GM12878 (cell line): ENCODE measurements at regions of chr22 and their contacts with region 1.

Region 1: DNA sequence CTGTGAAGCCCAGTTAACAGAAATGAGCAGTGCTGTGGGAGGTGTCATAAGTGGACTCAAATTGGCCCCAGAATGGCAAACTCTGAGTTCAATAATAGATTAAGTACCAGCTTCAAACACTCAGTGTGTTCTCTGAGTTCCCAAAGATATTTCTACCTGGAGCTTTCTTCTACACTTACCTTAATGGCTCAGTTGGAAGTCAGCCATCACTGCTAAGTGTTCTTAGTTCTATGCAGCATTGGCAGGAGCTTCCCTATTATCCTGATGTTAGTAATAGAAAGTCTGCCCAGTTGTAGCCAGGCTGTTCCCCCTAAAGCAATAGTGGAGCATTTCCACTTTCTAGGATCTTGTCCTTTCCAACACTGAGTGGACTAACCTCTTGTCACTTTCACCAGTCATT is 9.7 kb upstream of the PIK3IP1 start:
- DNase-seq: no peak
- ATAC-seq: no peak
- H3K4me3 ChIP-seq: no peak overlapping the region
- H3K27ac ChIP-seq: no peak overlapping the region
- H3K4me1 ChIP-seq: peaks cover 7% of the 10 kb centered on the region
- H3K27me3 ChIP-seq: no peaks in the 10 kb centered on the region
- CTCF ChIP-seq: no peak
- EP300 ChIP-seq: no peak
- POLR2A ChIP-seq: no peak
- RAD21 ChIP-seq: no peak

Region 2: DNA sequence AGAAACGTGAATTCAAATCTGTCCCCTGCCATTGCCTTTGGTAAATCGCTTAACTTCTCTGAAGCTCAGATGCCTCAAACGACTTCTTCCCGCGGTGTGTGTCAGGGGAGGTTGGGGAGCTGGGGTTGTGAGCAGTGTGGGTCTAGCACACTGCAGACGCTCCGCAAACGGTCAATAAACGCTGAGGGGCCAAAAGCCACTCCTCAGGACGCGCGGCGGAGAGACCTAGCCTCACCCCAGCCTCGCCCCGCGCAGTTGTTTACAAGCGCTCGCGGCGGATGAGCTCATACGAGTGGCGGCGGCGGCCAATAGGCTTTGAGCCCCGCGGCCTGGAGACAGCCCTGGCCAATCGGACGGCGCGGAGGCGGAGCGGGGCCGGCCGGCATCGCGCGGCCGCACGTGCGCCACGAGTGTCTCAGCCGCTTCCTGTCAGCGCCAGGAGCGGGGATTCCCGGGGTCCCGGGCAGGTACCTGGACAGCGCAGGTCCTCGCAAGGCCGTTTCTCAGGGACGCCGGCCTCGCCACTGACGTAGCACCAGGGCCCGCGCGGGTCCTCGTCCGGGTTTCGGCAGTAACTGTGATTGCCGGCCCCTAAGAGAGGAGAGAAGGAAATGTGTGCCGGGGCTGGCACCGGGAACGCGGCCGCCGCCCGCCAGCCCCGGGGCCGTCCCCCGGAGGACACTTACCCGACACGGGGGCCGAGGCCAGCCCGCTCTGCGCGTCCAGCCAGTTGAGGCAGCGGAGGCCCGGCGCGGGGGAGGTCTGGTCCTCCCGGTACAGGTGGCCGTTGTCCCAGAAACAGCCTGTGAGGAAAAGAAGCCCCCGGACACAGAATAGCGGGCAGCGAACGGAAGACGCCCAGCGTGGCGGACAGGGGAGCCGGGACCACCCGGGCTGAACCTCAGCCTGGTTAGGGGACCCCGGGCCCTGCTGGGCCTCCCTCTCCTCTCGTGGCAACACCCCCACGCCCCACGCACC is 11.2 kb before region 1 on chr22:
- CTCF ChIA-PET with region 1: interaction called, 11 read pairs
- POLR2A ChIA-PET with region 1: interaction called, 4 read pairs
- RAD21 ChIA-PET with region 1: interaction called, 4 read pairs
- SMC1A ChIA-PET with region 1: interaction called, 5 read pairs
- in situ Hi-C with region 1: no loop called
- intact Hi-C with region 1: no loop called
- DNase-seq: peak; percentile 48
- ATAC-seq: peak; percentile 96
- H3K4me3 ChIP-seq: peak overlapping the region; percentile 82
- H3K27ac ChIP-seq: peak overlapping the region; percentile 72
- H3K4me1 ChIP-seq: peaks cover 32% of the 10 kb centered on the region
- H3K27me3 ChIP-seq: no peaks in the 10 kb centered on the region
- CTCF ChIP-seq: no peak
- EP300 ChIP-seq: peak in 1 of 2 experiments; percentile 45; a peak in 1 of 4 replicates
- POLR2A ChIP-seq: peak; percentile 87
- RAD21 ChIP-seq: no peak